Naive thymus-derived CD4-positive, alpha-beta T cell (primary cell): ENCODE measurements at regions of chr18 and their contacts with region 1.

Region 1: DNA sequence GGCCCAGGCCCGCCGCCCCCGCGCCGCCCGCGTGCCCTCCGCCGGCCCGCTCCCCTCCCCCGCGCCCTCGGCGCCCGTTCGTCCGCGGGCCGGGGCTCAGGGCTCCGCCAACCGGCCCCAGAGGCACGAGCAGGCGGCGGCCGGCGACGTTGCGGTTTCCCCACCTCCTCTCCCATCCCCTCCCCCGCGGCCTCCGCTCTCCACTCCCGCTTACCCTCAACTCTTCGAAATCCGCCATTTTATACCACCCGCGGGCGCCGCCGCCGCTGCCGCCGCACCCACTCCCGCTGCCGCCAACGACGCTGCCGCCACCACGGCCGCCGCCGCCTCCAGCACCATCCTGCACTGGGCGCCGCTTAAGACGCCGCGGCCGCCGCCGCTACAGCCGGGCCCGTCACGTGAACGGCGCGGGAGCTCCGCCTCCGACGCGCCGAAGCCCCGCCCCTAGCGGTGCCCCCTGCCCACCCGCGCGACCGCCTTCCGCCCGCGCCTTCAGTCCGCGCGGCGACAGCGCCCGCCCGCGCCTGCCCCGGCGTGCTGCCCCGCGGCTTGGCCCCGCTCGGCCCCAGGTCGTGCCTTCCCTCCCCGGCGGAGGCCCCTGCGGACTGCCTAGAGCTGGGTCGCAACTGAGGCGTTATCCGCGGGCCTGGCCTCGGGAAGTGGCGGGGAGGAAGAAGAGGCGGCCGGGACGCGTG is at the starts of genes KATNAL2 and PIAS2:
- DNase-seq: peak; percentile 65 to 83 (median 70)
- ATAC-seq: peak; percentile 91
- H3K4me3 ChIP-seq: peak within 1 kb of the TSS; percentile 59
- H3K4me3 Mint-ChIP-seq: peak within 1 kb of the TSS; percentile 90 to 97 (median 93)
- H3K27ac ChIP-seq: peak within 1 kb of the TSS; percentile 75
- H3K27ac Mint-ChIP-seq: peak within 1 kb of the TSS; percentile 82 to 94 (median 87)
- H3K4me1 ChIP-seq: peaks cover 12 to 26% of the 10 kb centered on the region in 2 donors
- H3K4me1 Mint-ChIP-seq: peaks cover 36 to 56% (median 52%) of the 10 kb centered on the region in 7 donors
- H3K27me3 ChIP-seq: no peaks in the 10 kb centered on the region
- H3K27me3 Mint-ChIP-seq: peaks cover 0 to 7% (median 0%) of the 10 kb centered on the region in 5 donors
- total RNA-seq, gene KATNAL2: 1.1 to 2.8 (median 1.7) TPM
- total RNA-seq, gene PIAS2: 29.8 to 40.6 (median 36.1) TPM

Region 2: GRCh38 chr18:46104128-46104911 is 812.9 kb before region 1 on chr18 and contains the start of gene HAUS1:
- CTCF ChIA-PET with region 1: no interaction called
- POLR2A ChIA-PET with region 1: no interaction called
- intact Hi-C with region 1: loop called in 1 of 2 experiments (anchors 1 kb)
- DNase-seq: peak; percentile 62 to 87 (median 69)
- ATAC-seq: peak; percentile 98
- H3K4me3 ChIP-seq: peak within 1 kb of the TSS; percentile 89
- H3K4me3 Mint-ChIP-seq: peak within 1 kb of the TSS; percentile 93 to 99 (median 98)
- H3K27ac ChIP-seq: peak within 1 kb of the TSS; percentile 80
- H3K27ac Mint-ChIP-seq: peak within 1 kb of the TSS; percentile 73 to 97 (median 91)
- H3K4me1 ChIP-seq: peaks cover 5% of the 10 kb centered on the region in 2 donors
- H3K4me1 Mint-ChIP-seq: peaks cover 11 to 37% (median 26%) of the 10 kb centered on the region in 7 donors
- H3K27me3 ChIP-seq: no peaks in the 10 kb centered on the region
- H3K27me3 Mint-ChIP-seq: no peaks in the 10 kb centered on the region
- total RNA-seq, gene HAUS1: 10.4 to 47.2 (median 15.2) TPM

Region 3: GRCh38 chr18:46756559-46757201 is 160.6 kb before region 1 on chr18 and contains the start of gene ST8SIA5:
- CTCF ChIA-PET with region 1: no interaction called
- POLR2A ChIA-PET with region 1: no interaction called
- intact Hi-C with region 1: loop called in 1 of 2 experiments (anchors 10 kb)
- DNase-seq: no peak
- ATAC-seq: no peak
- H3K4me3 ChIP-seq: no peak within 1 kb of the TSS
- H3K4me3 Mint-ChIP-seq: peak within 1 kb of the TSS in 9 of 10 donors; percentile 25 to 73 (median 48)
- H3K27ac ChIP-seq: no peak within 1 kb of the TSS
- H3K27ac Mint-ChIP-seq: no peak within 1 kb of the TSS
- H3K4me1 ChIP-seq: no peaks in the 10 kb centered on the region
- H3K4me1 Mint-ChIP-seq: peaks cover 14 to 34% (median 21%) of the 10 kb centered on the region in 7 donors
- H3K27me3 ChIP-seq: peaks cover 0 to 3% of the 10 kb centered on the region in 2 donors
- H3K27me3 Mint-ChIP-seq: peaks cover 62 to 80% (median 69%) of the 10 kb centered on the region in 5 donors
- total RNA-seq, gene ST8SIA5: 0.02 to 0.11 TPM in 2 of 5 experiments, not detected in the others

Region 4: DNA sequence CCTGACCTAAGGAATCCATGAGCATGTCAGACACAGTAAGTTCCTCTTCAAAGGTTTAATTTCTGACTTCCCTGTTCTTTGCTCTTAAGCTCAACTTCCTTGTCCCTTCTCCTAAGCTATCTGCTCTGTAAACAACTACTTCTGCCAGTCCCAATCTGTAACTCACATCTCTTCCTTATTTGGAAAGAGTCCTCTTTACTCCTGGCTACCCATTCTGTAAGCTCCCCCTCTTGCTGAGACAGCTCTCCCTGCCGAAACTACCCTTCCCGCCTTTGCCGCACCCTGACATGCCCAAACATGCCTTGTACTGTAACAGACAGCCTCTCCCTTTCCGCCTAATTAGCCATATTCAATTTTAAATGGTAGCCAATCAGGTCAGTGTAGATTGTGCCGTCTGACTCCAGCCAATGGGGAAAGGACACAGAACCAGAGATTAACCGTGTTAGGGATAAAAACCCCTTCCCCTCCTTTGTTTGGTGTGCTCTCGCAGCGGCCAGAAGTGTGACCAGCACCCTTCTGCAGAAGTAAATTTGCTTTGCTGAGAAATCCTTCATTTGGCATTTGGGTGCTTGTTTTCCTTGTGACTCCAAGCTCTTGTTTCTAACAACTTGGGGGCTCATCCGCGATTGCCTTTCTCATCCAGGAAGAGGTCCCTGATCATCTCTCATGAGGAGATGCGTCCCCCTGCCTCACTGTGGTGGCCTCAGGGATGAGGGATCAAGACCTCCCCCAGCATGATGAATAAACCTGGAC is 48.9 kb before region 1 on chr18:
- CTCF ChIA-PET with region 1: no interaction called
- POLR2A ChIA-PET with region 1: no interaction called
- intact Hi-C with region 1: no loop called
- DNase-seq: no peak
- ATAC-seq: no peak
- H3K4me3 ChIP-seq: no peak overlapping the region
- H3K4me3 Mint-ChIP-seq: no peak overlapping the region
- H3K27ac ChIP-seq: no peak overlapping the region
- H3K27ac Mint-ChIP-seq: no peak overlapping the region
- H3K4me1 ChIP-seq: no peaks in the 10 kb centered on the region
- H3K4me1 Mint-ChIP-seq: peaks cover 13 to 42% (median 28%) of the 10 kb centered on the region in 7 donors
- H3K27me3 ChIP-seq: no peaks in the 10 kb centered on the region
- H3K27me3 Mint-ChIP-seq: no peaks in the 10 kb centered on the region

Region 5: DNA sequence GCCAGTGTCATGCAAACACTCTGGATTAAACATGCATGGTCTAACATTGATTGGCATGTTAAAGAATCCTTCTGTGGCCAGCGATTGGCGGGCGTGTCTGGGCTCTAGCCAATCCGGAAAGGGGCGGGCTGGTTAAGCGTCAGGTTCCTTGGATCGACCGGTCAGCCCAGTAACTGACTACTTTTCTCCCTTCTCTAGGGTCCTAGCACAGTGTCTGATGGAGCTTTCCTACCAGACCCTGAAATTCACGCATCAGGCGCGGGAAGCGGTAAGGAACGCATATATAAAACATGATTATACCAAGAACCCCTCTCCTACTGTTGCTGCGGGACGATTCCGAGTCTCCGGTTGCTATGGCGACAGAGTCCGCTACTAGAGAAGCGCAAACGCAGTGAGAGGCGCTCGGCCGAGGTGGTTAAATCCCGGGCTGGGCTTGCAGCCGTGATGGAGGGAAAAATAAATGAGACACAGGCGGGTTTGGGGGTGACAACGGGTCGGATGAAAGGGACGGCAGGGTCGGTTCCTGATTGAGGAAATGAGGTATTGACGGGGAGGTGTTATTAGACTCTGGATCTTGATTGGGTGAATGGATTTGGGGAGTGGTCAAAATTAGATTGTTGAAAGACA is 29.5 kb after region 1 on chr18:
- CTCF ChIA-PET with region 1: no interaction called
- POLR2A ChIA-PET with region 1: no interaction called
- intact Hi-C with region 1: loop called (anchors 1 to 2 kb)
- DNase-seq: peak; percentile 12 to 64 (median 48)
- ATAC-seq: peak; percentile 87
- H3K4me3 ChIP-seq: peak overlapping the region; percentile 74
- H3K4me3 Mint-ChIP-seq: no peak overlapping the region
- H3K27ac ChIP-seq: no peak overlapping the region
- H3K27ac Mint-ChIP-seq: no peak overlapping the region
- H3K4me1 ChIP-seq: no peaks in the 10 kb centered on the region
- H3K4me1 Mint-ChIP-seq: no peaks in the 10 kb centered on the region
- H3K27me3 ChIP-seq: peaks cover 0 to 3% of the 10 kb centered on the region in 2 donors
- H3K27me3 Mint-ChIP-seq: peaks cover 13 to 26% (median 17%) of the 10 kb centered on the region in 5 donors

Region 6: DNA sequence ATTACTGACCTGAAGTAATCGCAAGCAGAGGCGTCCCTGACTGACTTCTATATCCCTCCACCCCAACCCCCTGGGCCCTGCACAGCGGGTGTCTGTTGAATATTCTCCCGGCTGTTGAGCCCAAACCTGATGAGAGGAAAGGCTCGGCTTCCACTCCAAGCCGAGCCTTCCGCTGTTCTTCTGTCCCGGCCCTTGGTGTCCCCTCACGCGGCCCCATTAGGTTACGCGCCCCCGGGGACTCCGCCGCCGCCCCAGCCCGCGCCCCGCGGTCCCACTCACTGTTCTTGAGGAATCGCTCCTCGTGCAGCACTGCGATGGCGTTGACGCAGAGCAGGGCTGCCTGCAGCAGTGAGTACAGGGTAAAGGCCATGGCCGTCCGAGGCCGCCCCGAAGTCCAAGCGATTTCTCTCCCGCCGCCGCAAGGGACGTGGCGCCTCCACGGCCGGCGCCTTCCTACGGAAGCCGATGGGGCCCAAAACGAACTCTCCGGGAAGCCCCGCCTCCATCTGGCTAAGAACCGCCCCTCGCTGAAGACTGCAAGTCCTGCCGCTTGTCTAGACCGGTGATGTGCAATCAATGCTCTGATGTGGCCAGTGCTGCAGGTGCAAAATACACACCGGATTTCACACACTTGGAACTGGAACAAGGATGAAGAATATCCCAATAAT is 258.8 kb after region 1 on chr18 and contains the start of gene IER3IP1:
- CTCF ChIA-PET with region 1: no interaction called
- POLR2A ChIA-PET with region 1: no interaction called
- intact Hi-C with region 1: loop called (anchors 1 to 10 kb)
- DNase-seq: peak; percentile 71 to 89 (median 85)
- ATAC-seq: peak; percentile 97
- H3K4me3 ChIP-seq: peak within 1 kb of the TSS; percentile 94
- H3K4me3 Mint-ChIP-seq: peak within 1 kb of the TSS in 8 of 10 donors; percentile 6 to 64 (median 53)
- H3K27ac ChIP-seq: peak within 1 kb of the TSS; percentile 72
- H3K27ac Mint-ChIP-seq: peak within 1 kb of the TSS in 6 of 9 donors; percentile 70 to 91 (median 82)
- H3K4me1 ChIP-seq: peaks cover 10 to 17% of the 10 kb centered on the region in 2 donors
- H3K4me1 Mint-ChIP-seq: peaks cover 0 to 9% (median 0%) of the 10 kb centered on the region in 7 donors
- H3K27me3 ChIP-seq: no peaks in the 10 kb centered on the region
- H3K27me3 Mint-ChIP-seq: peaks cover 0 to 12% (median 0%) of the 10 kb centered on the region in 5 donors
- total RNA-seq, gene IER3IP1: 3.5 to 13.4 (median 8.8) TPM